ENCODE measurements at regions of chr7 and their contacts with region 1.

Region 1: GRCh38 chr7:106176414-106177299 is 64.5 kb upstream of the SYPL1 start:
- DNase-seq: peak in 1 of 2 experiments; percentile 88
- H3K4me3 ChIP-seq: no peak overlapping the region
- H3K27ac ChIP-seq: no peak overlapping the region
- H3K4me1 ChIP-seq: peaks cover 10% of the 10 kb centered on the region
- H3K27me3 ChIP-seq: no peaks in the 10 kb centered on the region
- CTCF ChIP-seq: peak; percentile 93

Region 2: GRCh38 chr7:106239404-106239803 is 62.7 kb after region 1 on chr7:
- CTCF ChIA-PET with region 1: no interaction called
- POLR2A ChIA-PET with region 1: no interaction called
- intact Hi-C with region 1: loop called (anchors 5 kb)
- DNase-seq: peak; percentile 39 to 57
- H3K4me3 ChIP-seq: no peak overlapping the region
- H3K27ac ChIP-seq: no peak overlapping the region
- H3K4me1 ChIP-seq: 0 out of 2 replicates have a peak, but pooled peaks cover 11% of the 10 kb centered on the region
- H3K27me3 ChIP-seq: no peaks in the 10 kb centered on the region
- CTCF ChIP-seq: no peak

Region 3: GRCh38 chr7:106367018-106367420 is 190.4 kb after region 1 on chr7:
- CTCF ChIA-PET with region 1: no interaction called
- POLR2A ChIA-PET with region 1: no interaction called
- intact Hi-C with region 1: loop called (anchors 5 kb)
- DNase-seq: no peak
- H3K4me3 ChIP-seq: no peak overlapping the region
- H3K27ac ChIP-seq: peak overlapping the region; percentile 99
- H3K4me1 ChIP-seq: peaks cover 54% of the 10 kb centered on the region
- H3K27me3 ChIP-seq: no peaks in the 10 kb centered on the region
- CTCF ChIP-seq: 0 out of 2 replicates have a peak, but pooled peaks have one; percentile 21

Region 4: GRCh38 chr7:106659963-106660861 is 483.6 kb after region 1 on chr7:
- CTCF ChIA-PET with region 1: interaction called, 8 read pairs
- POLR2A ChIA-PET with region 1: interaction called, 3 read pairs
- intact Hi-C with region 1: loop called (anchors 1 kb)
- DNase-seq: peak; percentile 54 to 86
- H3K4me3 ChIP-seq: peak overlapping the region; percentile 81
- H3K27ac ChIP-seq: peak overlapping the region; percentile 71
- H3K4me1 ChIP-seq: peaks cover 19% of the 10 kb centered on the region
- H3K27me3 ChIP-seq: no peaks in the 10 kb centered on the region
- CTCF ChIP-seq: peak; percentile 77

Region 5: GRCh38 chr7:107150375-107151073 is 973.9 kb after region 1 on chr7:
- CTCF ChIA-PET with region 1: no interaction called
- POLR2A ChIA-PET with region 1: no interaction called
- intact Hi-C with region 1: loop called (anchors 1 kb)
- DNase-seq: peak; percentile 45 to 70
- H3K4me3 ChIP-seq: no peak overlapping the region
- H3K27ac ChIP-seq: no peak overlapping the region
- H3K4me1 ChIP-seq: peaks cover 12% of the 10 kb centered on the region; the same call in 1 of the 2 replicates
- H3K27me3 ChIP-seq: no peaks in the 10 kb centered on the region
- CTCF ChIP-seq: peak; percentile 87

Region 6: GRCh38 chr7:107879400-107880035 is 1702.9 kb after region 1 on chr7:
- CTCF ChIA-PET with region 1: interaction called, 4 read pairs
- POLR2A ChIA-PET with region 1: interaction called, 3 read pairs
- intact Hi-C with region 1: loop called (anchors 5 kb)
- DNase-seq: peak; percentile 39 to 79
- H3K4me3 ChIP-seq: no peak overlapping the region
- H3K27ac ChIP-seq: no peak overlapping the region
- H3K4me1 ChIP-seq: peaks cover 13% of the 10 kb centered on the region; the same call in 1 of the 2 replicates
- H3K27me3 ChIP-seq: no peaks in the 10 kb centered on the region
- CTCF ChIP-seq: peak; percentile 82